Transverse colon (tissue), 4 donors: ENCODE measurements at regions of chr17 and their contacts with region 1.

Region 1: GRCh38 chr17:69175812-69176795 is 34.4 kb upstream of the ABCA6 start:
- DNase-seq: no peak
- H3K4me3 ChIP-seq: no peak overlapping the region
- H3K27ac ChIP-seq: no peak overlapping the region
- H3K4me1 ChIP-seq: peaks cover 0 to 8% (median 0%) of the 10 kb centered on the region in 4 donors
- H3K27me3 ChIP-seq: no peaks in the 10 kb centered on the region
- CTCF ChIP-seq: no peak
- EP300 ChIP-seq: no peak
- POLR2A ChIP-seq: no peak

Region 2: GRCh38 chr17:68981288-68981687 is 194.8 kb before region 1 on chr17:
- in situ Hi-C with region 1: loop called in 1 of 4 experiments (anchors 25 kb)
- intact Hi-C with region 1: no loop called
- DNase-seq: peak; percentile 25
- H3K4me3 ChIP-seq: no peak overlapping the region
- H3K27ac ChIP-seq: no peak overlapping the region
- H3K4me1 ChIP-seq: peaks cover 0 to 5% (median 0%) of the 10 kb centered on the region in 4 donors
- H3K27me3 ChIP-seq: no peaks in the 10 kb centered on the region
- CTCF ChIP-seq: no peak
- EP300 ChIP-seq: no peak
- POLR2A ChIP-seq: no peak

Region 3: DNA sequence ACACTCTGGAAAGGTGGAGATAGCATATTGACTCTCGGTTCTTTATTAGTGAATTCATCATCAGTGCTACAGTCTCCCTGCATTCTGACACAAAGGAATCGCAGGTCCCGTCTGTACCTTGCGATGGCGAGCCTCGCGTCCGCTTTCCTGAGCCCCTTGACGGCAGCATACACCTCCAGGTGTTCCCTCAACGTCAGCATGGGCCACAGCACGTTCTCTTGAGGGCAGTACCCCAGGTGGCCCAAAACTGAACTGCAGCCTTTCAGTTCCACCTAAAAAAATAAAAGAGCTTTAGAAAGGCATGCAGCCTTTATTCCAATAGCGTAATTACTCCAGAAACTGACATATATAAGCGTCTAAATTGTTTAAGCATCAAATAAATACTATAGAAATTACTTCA is 91.2 kb before region 1 on chr17:
- in situ Hi-C with region 1: loop called in 1 of 4 experiments (anchors 25 kb)
- intact Hi-C with region 1: no loop called
- DNase-seq: no peak
- H3K4me3 ChIP-seq: no peak overlapping the region
- H3K27ac ChIP-seq: no peak overlapping the region
- H3K4me1 ChIP-seq: no peaks in the 10 kb centered on the region
- H3K27me3 ChIP-seq: no peaks in the 10 kb centered on the region
- CTCF ChIP-seq: peak in 4 of 5 experiments; percentile 16 to 33 (median 18)
- EP300 ChIP-seq: no peak
- POLR2A ChIP-seq: no peak